Transverse colon (tissue), 4 donors: ENCODE measurements at regions of chr13 and their contacts with region 1.

Region 1: DNA sequence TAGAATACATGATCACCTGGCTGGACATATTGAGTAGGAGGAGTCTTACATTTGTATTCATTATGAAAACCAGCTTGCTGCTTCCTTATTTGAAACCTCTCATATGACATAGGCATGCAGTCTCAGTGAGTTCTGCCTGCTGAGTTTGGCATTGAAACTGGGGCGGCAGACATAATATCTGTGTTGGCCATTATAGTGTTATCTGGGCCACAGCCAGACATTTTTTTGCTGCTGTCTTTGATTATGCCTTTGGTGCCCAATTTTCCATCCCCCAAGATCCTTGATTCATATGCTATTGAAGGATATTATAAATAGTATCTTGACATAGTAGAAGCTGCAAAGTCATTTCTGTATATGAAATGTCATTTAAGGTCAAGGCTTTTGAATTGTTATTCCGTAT is 15.8 kb downstream of the FREM2 start:
- DNase-seq: no peak
- H3K4me3 ChIP-seq: no peak overlapping the region
- H3K27ac ChIP-seq: no peak overlapping the region
- H3K4me1 ChIP-seq: no peaks in the 10 kb centered on the region
- H3K27me3 ChIP-seq: no peaks in the 10 kb centered on the region
- CTCF ChIP-seq: no peak
- EP300 ChIP-seq: no peak
- POLR2A ChIP-seq: no peak

Region 2: GRCh38 chr13:38718374-38718773 is 15.7 kb after region 1 on chr13:
- in situ Hi-C with region 1: no loop called
- intact Hi-C with region 1: loop called (anchors 2 kb)
- DNase-seq: no peak
- H3K4me3 ChIP-seq: no peak overlapping the region
- H3K27ac ChIP-seq: no peak overlapping the region
- H3K4me1 ChIP-seq: no peaks in the 10 kb centered on the region
- H3K27me3 ChIP-seq: no peaks in the 10 kb centered on the region
- CTCF ChIP-seq: no peak
- EP300 ChIP-seq: no peak
- POLR2A ChIP-seq: no peak